ENCODE measurements at regions of chr6 and their contacts with region 1.

Region 1: DNA sequence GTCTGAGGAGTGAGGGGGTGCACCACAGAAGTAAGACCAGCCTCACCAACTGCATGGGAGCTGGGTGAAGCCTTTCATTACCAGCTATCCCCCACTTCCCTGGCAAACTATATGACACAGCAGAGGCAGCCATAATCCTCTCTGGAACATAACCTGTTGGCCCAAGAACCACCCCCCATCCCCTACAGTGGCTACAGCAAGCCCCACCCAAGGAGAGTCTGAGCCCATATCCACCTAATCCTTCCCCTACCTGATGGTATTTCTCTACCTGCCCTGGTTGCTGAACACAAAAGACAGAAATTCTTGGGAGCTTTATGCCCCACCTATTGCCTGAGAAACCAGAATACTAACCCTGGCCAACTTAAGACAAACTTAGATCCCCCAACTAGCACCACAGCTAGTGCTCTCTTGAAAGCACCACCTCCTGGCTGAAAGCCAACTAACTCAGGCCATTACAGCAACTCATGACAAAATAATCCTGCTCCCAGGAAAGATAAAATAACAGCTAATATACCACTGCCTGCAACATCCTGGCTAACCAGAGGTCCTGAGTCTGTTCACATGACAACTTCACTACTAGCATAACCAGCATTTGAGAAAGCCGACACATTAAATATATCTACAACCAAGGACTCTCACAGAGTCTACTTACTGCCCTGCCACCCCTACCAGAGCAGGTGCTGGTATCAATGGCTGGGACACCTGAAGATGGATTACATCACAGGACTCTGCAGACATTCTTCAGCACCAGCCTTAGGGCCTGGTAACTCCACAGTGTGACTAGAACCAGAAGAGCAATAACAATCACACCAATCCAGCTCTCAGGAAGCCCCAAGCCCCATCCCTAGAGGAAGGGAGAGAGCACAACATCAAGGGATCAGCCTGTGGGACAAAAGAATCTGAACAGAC is 11.1 kb downstream of the RNGTT start:
- DNase-seq: no peak
- ATAC-seq: no peak
- H3K4me3 ChIP-seq: no peak overlapping the region
- H3K27ac ChIP-seq: no peak overlapping the region
- H3K4me1 ChIP-seq: peaks cover 0 to 6% (median 0%) of the 10 kb centered on the region in 9 donors
- H3K27me3 ChIP-seq: no peaks in the 10 kb centered on the region
- CTCF ChIP-seq: no peak

Region 2: DNA sequence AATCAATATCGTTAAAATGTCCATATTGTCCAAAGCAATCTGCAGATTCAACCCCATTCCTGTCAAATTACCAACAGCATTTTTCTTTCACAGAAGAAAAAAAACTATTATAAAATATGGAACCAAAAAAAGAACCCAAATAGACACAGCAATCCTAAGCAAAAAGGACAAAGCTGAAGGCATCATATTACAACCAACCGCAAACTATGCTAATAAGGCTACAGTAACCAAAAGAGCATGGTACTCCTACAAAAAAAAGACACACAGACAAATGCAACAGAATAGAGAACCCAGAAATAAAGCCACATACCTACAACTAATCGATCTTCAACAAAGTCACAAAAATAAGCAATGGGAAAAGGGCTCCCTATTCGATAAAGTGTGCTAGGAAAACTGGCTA is 38.1 kb before region 1 on chr6:
- intact Hi-C with region 1: loop called in 1 of 10 experiments (anchors 2 kb)
- DNase-seq: no peak
- ATAC-seq: no peak
- H3K4me3 ChIP-seq: no peak overlapping the region
- H3K27ac ChIP-seq: no peak overlapping the region
- H3K4me1 ChIP-seq: peaks cover 0 to 21% (median 13%) of the 10 kb centered on the region in 9 donors
- H3K27me3 ChIP-seq: no peaks in the 10 kb centered on the region
- CTCF ChIP-seq: no peak